B cell (primary cell): ENCODE measurements at regions of chr17 and their contacts with region 1.

Region 1: GRCh38 chr17:40531051-40531991 is 29.9 kb upstream of the TNS4 start:
- DNase-seq: peak; percentile 75
- ATAC-seq: peak; percentile 15
- H3K4me3 ChIP-seq: no peak overlapping the region
- H3K4me3 Mint-ChIP-seq: peak overlapping the region; percentile 69
- H3K27ac ChIP-seq: peak overlapping the region; percentile 72 to 80
- H3K27ac Mint-ChIP-seq: peak overlapping the region; percentile 87
- H3K4me1 ChIP-seq: peaks cover 45 to 51% of the 10 kb centered on the region in 2 donors
- H3K4me1 Mint-ChIP-seq: peaks cover 61% of the 10 kb centered on the region
- H3K27me3 ChIP-seq: no peaks in the 10 kb centered on the region
- H3K27me3 Mint-ChIP-seq: no peaks in the 10 kb centered on the region
- CTCF ChIP-seq: no peak

Region 2: DNA sequence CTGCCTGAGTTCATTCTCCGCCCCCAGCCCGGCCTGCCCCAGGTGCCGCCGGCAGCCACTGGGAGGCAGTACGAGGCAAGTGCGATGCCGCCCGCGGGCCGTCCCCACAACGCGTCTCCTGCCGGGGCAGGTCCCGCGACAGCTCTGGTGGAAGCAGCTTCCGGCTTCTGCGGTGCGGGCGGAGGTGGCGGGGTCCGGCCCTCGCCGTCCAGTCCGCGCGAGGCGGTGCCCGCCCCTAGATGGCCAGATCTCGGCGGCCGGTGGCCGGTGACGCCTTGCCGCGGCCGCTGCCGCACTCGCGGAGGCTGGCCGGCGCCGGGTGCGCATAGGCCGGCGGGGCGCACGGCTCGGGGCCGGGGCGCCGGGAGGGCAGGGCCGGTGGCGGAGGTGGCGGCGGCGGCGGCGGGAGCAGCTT is 168.6 kb before region 1 on chr17:
- CTCF ChIA-PET with region 1: interaction called, 114 read pairs
- POLR2A ChIA-PET with region 1: interaction called, 4 read pairs
- intact Hi-C with region 1: loop called (anchors 1 kb)
- DNase-seq: peak; percentile 86
- ATAC-seq: peak; percentile 80
- H3K4me3 ChIP-seq: peak overlapping the region in 4 of 5 experiments; percentile 28 to 58 (median 52)
- H3K4me3 Mint-ChIP-seq: peak overlapping the region; percentile 85
- H3K27ac ChIP-seq: no peak overlapping the region
- H3K27ac Mint-ChIP-seq: peak overlapping the region; percentile 34
- H3K4me1 ChIP-seq: peaks cover 15 to 17% of the 10 kb centered on the region in 2 donors
- H3K4me1 Mint-ChIP-seq: peaks cover 12% of the 10 kb centered on the region
- H3K27me3 ChIP-seq: peaks cover 0 to 34% (median 8%) of the 10 kb centered on the region in 4 experiments
- H3K27me3 Mint-ChIP-seq: peaks cover 12% of the 10 kb centered on the region
- CTCF ChIP-seq: peak; percentile 70

Region 3: DNA sequence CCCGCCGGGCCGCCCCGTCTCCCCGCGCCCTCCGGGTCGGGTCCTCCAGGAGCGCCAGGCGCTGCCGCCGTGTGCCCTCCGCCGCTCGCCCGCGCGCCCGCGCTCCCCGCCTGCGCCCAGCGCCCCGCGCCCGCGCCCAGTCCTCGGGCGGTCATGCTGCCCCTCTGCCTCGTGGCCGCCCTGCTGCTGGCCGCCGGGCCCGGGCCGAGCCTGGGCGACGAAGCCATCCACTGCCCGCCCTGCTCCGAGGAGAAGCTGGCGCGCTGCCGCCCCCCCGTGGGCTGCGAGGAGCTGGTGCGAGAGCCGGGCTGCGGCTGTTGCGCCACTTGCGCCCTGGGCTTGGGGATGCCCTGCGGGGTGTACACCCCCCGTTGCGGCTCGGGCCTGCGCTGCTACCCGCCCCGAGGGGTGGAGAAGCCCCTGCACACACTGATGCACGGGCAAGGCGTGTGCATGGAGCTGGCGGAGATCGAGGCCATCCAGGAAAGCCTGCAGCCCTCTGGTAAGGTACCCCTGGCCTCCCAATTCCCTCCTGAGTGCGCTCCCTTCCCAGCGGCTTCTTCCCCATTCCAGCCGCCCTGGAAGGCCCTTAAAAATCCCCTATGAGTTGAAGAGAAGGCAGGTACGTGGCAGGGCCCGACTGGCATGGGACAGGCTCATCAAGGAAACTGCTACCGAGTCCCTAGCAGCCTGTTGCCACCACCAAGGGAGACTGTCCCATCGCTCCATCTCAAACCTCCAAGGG is 87.6 kb before region 1 on chr17:
- CTCF ChIA-PET with region 1: interaction called, 172 read pairs
- POLR2A ChIA-PET with region 1: interaction called, 18 read pairs
- intact Hi-C with region 1: loop called (anchors 1 kb)
- DNase-seq: peak; percentile 83
- ATAC-seq: peak; percentile 80
- H3K4me3 ChIP-seq: peak overlapping the region; percentile 28 to 66 (median 48)
- H3K4me3 Mint-ChIP-seq: peak overlapping the region; percentile 88
- H3K27ac ChIP-seq: peak overlapping the region in 1 of 2 donors; percentile 62
- H3K27ac Mint-ChIP-seq: peak overlapping the region; percentile 84
- H3K4me1 ChIP-seq: peaks cover 29 to 44% of the 10 kb centered on the region in 2 donors
- H3K4me1 Mint-ChIP-seq: peaks cover 46% of the 10 kb centered on the region
- H3K27me3 ChIP-seq: peaks cover 0 to 6% (median 0%) of the 10 kb centered on the region in 4 experiments
- H3K27me3 Mint-ChIP-seq: no peaks in the 10 kb centered on the region
- CTCF ChIP-seq: peak; percentile 47

Region 4: DNA sequence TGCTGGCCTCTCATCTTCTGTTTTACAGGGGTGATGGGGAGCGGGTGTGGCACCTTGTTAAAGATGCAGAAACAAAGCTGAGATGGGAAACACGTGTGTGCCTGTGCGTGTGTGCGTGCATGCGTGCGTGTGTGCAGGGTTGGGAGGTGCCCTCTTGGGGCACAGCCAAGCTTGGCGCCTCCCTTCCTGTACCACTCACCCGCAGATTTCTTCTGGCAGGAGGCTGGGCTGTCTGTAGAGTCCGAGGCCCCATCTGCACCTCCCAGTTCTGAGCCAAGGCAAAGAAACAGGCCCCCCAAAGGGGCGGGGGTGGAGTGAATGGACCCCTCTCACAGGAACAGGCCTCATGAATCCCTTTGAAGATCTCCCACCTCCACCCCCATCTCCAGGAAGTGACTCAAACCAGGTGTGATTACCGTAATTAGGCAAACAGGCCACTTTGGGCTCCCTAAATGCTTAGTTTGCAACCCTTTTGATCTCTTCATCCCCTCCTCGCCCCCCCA is 50.8 kb before region 1 on chr17:
- CTCF ChIA-PET with region 1: interaction called, 52 read pairs
- POLR2A ChIA-PET with region 1: interaction called, 7 read pairs
- intact Hi-C with region 1: loop called (anchors 1 kb)
- DNase-seq: peak; percentile 89
- ATAC-seq: peak; percentile 86
- H3K4me3 ChIP-seq: peak overlapping the region in 3 of 5 experiments; percentile 3 to 39 (median 5)
- H3K4me3 Mint-ChIP-seq: peak overlapping the region; percentile 80
- H3K27ac ChIP-seq: peak overlapping the region; percentile 53 to 86
- H3K27ac Mint-ChIP-seq: peak overlapping the region; percentile 92
- H3K4me1 ChIP-seq: peaks cover 44 to 56% of the 10 kb centered on the region in 2 donors
- H3K4me1 Mint-ChIP-seq: peaks cover 45% of the 10 kb centered on the region
- H3K27me3 ChIP-seq: no peaks in the 10 kb centered on the region
- H3K27me3 Mint-ChIP-seq: no peaks in the 10 kb centered on the region
- CTCF ChIP-seq: no peak

Region 5: GRCh38 chr17:40542558-40543411 is 11.5 kb after region 1 on chr17:
- CTCF ChIA-PET with region 1: interaction called, 77 read pairs
- POLR2A ChIA-PET with region 1: interaction called, 34 read pairs
- intact Hi-C with region 1: loop called (anchors 2 kb)
- DNase-seq: peak; percentile 71
- ATAC-seq: peak; percentile 11
- H3K4me3 ChIP-seq: no peak overlapping the region
- H3K4me3 Mint-ChIP-seq: peak overlapping the region; percentile 63
- H3K27ac ChIP-seq: peak overlapping the region in 1 of 2 donors; percentile 30
- H3K27ac Mint-ChIP-seq: peak overlapping the region; percentile 89
- H3K4me1 ChIP-seq: peaks cover 48 to 61% of the 10 kb centered on the region in 2 donors
- H3K4me1 Mint-ChIP-seq: peaks cover 64% of the 10 kb centered on the region
- H3K27me3 ChIP-seq: no peaks in the 10 kb centered on the region
- H3K27me3 Mint-ChIP-seq: no peaks in the 10 kb centered on the region
- CTCF ChIP-seq: no peak

Region 6: DNA sequence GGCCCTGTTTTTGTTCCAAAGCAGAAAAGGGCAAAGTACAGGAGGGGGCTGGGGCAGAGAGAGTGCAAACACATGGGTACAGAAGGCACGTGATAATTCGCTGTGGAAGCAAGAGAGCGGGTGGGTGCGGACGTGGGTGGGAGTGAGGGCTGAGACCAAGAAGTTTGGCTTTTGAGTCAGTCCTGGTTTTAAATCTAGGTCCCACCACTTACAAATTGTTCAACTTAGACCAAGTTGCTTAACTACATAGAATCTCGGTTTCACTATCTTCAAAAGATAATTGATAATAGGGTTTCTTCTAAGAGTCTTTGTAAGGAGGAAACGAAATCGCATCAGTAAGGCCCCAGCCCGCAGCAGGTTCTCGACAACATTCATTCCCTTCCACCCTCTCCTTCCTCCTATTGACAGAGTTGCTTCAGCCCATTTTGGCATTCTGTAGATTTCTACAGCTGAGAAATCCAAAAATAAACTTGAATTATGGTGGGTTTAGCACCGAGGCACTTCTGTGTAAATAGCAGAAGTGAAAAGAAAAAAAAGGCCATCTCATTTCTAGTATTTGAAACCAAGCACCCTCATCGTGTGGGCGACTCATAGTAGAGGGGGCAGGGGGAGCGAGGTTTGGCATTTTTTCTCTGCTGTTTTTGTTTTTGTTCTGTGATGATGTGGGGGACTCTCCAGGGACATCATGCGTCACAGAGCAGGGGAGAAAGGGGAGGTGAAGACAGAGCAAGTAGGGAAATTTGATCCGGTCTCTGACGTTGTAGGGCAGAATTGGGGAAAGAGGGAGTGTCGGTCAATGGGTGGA is 67.5 kb after region 1 on chr17:
- CTCF ChIA-PET with region 1: interaction called, 10 read pairs
- POLR2A ChIA-PET with region 1: interaction called, 3 read pairs
- intact Hi-C with region 1: no loop called
- DNase-seq: peak; percentile 97
- ATAC-seq: peak; percentile 83
- H3K4me3 ChIP-seq: peak overlapping the region in 3 of 5 experiments; percentile 12 to 37 (median 27)
- H3K4me3 Mint-ChIP-seq: peak overlapping the region; percentile 52
- H3K27ac ChIP-seq: peak overlapping the region; percentile 92 to 96
- H3K27ac Mint-ChIP-seq: peak overlapping the region; percentile 87
- H3K4me1 ChIP-seq: peaks cover 72 to 76% of the 10 kb centered on the region in 2 donors
- H3K4me1 Mint-ChIP-seq: peaks cover 85% of the 10 kb centered on the region
- H3K27me3 ChIP-seq: no peaks in the 10 kb centered on the region
- H3K27me3 Mint-ChIP-seq: no peaks in the 10 kb centered on the region
- CTCF ChIP-seq: no peak